ENCODE measurements at regions of chr1 and their contacts with region 1.

Region 1: GRCh38 chr1:11645670-11646265 is 8.5 kb downstream of the FBXO2 start:
- DNase-seq: peak; percentile 62
- ATAC-seq: peak; percentile 78
- H3K4me3 ChIP-seq: no peak overlapping the region
- H3K27ac ChIP-seq: no peak overlapping the region
- H3K4me1 ChIP-seq: peaks cover 2 to 14% of the 10 kb centered on the region in 2 experiments; a peak in 3 of 4 replicates
- H3K27me3 ChIP-seq: no peaks in the 10 kb centered on the region
- CTCF ChIP-seq: peak in 2 of 3 experiments; percentile 73 to 87; a peak in 4 of 6 replicates
- POLR2A ChIP-seq: no peak
- RAD21 ChIP-seq: no peak

Region 2: DNA sequence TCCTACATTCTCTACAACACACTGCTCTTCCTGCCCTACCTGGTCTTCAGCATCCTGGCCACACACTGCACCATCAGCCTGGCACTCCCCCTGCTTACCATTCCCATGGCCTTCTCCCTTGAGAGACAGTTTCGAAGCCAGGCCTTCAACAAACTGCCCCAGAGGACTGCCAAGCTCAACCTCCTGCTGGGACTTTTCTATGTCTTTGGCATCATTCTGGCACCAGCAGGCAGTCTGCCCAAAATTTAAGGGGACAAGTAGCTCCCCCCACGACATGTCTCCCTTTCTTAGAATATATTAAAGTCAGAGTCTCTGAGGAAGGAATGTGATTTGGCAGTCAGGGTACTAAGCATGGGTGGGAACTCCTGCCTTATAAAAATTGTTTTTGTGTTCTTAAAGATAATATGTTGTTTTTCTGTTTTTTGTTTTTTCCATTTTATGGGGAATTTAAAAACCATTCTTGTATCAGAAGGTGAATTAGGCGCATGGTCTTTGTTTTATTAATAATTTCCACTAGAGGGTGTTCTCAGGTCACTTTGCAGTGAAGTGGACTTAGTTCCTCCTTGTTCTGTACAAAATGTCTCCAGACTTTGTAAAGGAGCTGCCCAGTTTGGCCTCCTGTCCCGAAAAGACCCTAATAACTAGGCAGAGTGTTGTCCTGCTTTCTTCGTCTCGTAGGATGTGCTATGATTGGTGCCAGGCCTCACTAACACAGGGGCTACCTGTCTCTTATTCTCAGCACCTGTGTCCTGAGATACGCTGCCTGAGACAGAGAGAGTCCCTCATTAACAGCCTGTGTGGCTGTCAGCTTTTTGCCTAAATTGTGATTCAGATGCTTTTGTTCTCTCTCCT is 359.7 kb before region 1 on chr1:
- CTCF ChIA-PET with region 1: no interaction called
- POLR2A ChIA-PET with region 1: no interaction called
- RAD21 ChIA-PET with region 1: no interaction called
- intact Hi-C with region 1: loop called (anchors 2 kb)
- DNase-seq: no peak
- ATAC-seq: peak; percentile 59
- H3K4me3 ChIP-seq: no peak overlapping the region
- H3K27ac ChIP-seq: no peak overlapping the region
- H3K4me1 ChIP-seq: no peaks in the 10 kb centered on the region
- H3K27me3 ChIP-seq: no peaks in the 10 kb centered on the region
- CTCF ChIP-seq: peak; percentile 12 to 45 (median 37); a peak in 4 of 6 replicates
- POLR2A ChIP-seq: no peak
- RAD21 ChIP-seq: peak; percentile 52

Region 3: DNA sequence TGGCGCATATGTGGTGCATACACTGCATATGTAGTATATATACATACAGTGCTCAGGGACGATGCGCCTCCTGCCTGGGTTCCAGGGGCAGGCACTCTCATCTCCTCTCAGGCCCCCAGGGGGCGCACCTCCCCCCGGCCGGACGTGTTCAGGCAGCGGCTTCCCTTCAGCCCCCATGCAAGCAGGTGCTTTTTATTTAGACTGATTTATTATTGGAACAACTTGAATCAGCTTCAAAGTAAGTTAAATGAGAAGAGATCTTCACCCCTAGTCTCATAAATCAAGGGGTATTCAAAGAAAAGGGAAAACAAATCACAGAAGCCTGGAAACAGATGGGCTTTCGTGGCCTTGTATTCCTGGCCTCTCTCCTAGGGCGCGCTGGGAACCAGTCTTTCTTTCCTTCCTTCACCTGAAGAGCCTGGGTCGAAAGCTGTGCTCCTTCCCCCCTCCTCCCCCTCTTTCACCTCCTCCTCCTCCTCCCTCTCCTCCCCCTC is 308.1 kb before region 1 on chr1:
- CTCF ChIA-PET with region 1: no interaction called
- POLR2A ChIA-PET with region 1: no interaction called
- RAD21 ChIA-PET with region 1: no interaction called
- intact Hi-C with region 1: loop called (anchors 1 kb)
- DNase-seq: peak; percentile 19
- ATAC-seq: peak; percentile 95
- H3K4me3 ChIP-seq: no peak overlapping the region
- H3K27ac ChIP-seq: no peak overlapping the region
- H3K4me1 ChIP-seq: peaks cover 5 to 7% of the 10 kb centered on the region in 2 experiments; a peak in 2 of 4 replicates
- H3K27me3 ChIP-seq: no peaks in the 10 kb centered on the region
- CTCF ChIP-seq: peak; percentile 88 to 98 (median 95)
- POLR2A ChIP-seq: no peak
- RAD21 ChIP-seq: peak; percentile 65

Region 4: DNA sequence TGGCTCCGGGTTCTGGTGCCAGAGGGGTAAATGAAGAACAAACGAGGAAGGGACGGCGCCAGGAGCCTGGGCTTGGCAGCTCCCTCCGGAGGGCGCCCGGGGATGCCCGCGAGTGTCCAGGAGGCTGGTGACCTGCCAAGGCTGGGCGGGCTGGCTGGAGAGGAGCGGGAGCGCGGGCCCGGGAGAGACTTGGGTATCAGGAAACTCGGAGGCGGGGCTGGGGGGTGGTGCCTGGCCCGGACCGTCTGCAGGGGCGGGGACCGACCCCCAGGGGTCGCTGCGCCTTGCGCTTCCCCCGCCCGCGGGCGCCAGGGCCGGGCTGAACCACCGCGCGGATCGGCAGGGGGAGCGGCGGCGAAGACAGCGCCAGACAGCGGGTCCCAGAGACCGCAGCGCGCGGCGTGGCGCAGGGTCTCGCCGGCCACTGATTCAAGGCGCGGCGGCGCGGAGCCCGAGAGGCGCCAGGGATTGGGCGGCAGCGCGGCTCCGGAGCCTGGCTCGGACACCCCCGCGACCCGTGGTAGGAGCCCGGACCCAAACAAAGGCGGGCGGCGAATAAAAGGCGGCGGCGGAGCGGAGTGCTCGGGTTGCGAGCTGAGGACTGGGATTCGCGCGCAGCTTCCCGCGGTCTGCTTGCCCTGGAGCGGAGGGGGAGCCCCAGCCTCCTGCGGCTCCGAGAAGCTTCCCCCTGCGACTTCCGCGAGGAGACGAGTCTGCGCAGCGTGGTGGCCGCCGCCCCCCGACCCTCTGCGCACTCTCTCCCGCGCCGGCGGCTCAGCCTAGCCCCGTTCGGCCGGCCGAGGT is 167.0 kb before region 1 on chr1 and contains the start of gene DISP3:
- CTCF ChIA-PET with region 1: interaction called, 8 read pairs
- POLR2A ChIA-PET with region 1: no interaction called
- RAD21 ChIA-PET with region 1: no interaction called
- intact Hi-C with region 1: loop called (anchors 2 kb)
- DNase-seq: peak; percentile 56
- ATAC-seq: peak; percentile 91
- H3K4me3 ChIP-seq: peak within 1 kb of the TSS; percentile 55 to 68
- H3K27ac ChIP-seq: peak within 1 kb of the TSS; percentile 70; the same call in 1 of the 2 replicates
- H3K4me1 ChIP-seq: peaks cover 0 to 16% of the 10 kb centered on the region in 2 experiments; a peak in 1 of 4 replicates
- H3K27me3 ChIP-seq: peaks cover 58% of the 10 kb centered on the region
- CTCF ChIP-seq: peak; percentile 15 to 84 (median 62); a peak in 4 of 6 replicates
- POLR2A ChIP-seq: peak; percentile 88
- RAD21 ChIP-seq: peak; percentile 42
- total RNA-seq, gene DISP3: 2.3 TPM

Region 5: GRCh38 chr1:11711490-11711889 is 65.7 kb after region 1 on chr1:
- CTCF ChIA-PET with region 1: interaction called, 14 read pairs
- POLR2A ChIA-PET with region 1: no interaction called
- RAD21 ChIA-PET with region 1: interaction called in 1 of 2 experiments, 3 read pairs
- intact Hi-C with region 1: no loop called
- DNase-seq: no peak
- ATAC-seq: 0 out of 2 replicates have a peak, but pooled peaks have one; percentile 5
- H3K4me3 ChIP-seq: no peak overlapping the region
- H3K27ac ChIP-seq: no peak overlapping the region
- H3K4me1 ChIP-seq: peaks cover 16 to 26% of the 10 kb centered on the region in 2 experiments
- H3K27me3 ChIP-seq: no peaks in the 10 kb centered on the region
- CTCF ChIP-seq: no peak
- POLR2A ChIP-seq: no peak
- RAD21 ChIP-seq: no peak

Region 6: DNA sequence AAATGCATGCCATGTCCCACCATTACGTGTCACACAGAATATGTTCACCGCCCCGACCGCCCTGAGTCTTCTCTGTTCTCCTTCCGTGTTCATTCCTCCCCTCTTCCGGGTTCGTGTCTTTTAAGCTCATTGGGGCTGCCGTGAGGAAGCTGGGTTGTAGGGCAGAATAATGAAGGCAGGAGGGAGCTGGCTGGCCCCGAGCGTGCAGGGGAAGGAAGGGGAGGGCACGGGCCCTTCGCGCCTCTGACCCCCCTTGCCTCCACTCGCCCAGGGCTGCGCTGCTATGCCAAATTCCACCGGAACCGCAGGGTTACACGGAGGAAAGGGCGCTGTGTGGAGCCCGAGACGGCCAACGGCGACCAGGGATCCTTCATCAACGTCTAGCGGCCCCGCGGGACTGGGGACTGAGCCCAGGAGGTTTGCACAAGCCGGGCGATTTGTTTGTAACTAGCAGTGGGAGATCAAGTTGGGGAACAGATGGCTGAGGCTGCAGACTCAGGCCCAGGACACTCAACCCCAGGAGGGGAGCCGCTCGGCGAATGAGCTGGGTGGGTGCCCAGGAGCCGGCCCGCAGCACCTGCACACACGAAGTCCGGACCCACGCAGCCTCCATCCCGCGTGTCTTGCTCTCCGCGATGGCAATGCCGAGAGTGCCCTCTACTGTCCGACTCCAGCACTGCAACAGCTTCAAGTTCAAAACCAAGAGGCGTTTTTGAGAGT is 73.7 kb after region 1 on chr1:
- CTCF ChIA-PET with region 1: interaction called, 15 read pairs
- POLR2A ChIA-PET with region 1: no interaction called
- RAD21 ChIA-PET with region 1: interaction called, 6 to 7 read pairs
- intact Hi-C with region 1: no loop called
- DNase-seq: no peak
- ATAC-seq: peak; percentile 78
- H3K4me3 ChIP-seq: no peak overlapping the region
- H3K27ac ChIP-seq: no peak overlapping the region
- H3K4me1 ChIP-seq: peaks cover 0 to 16% of the 10 kb centered on the region in 2 experiments; a peak in 2 of 4 replicates
- H3K27me3 ChIP-seq: no peaks in the 10 kb centered on the region
- CTCF ChIP-seq: peak; percentile 91 to 98 (median 97)
- POLR2A ChIP-seq: no peak
- RAD21 ChIP-seq: peak; percentile 99

Region 7: GRCh38 chr1:11862890-11863289 is 217.1 kb after region 1 on chr1:
- CTCF ChIA-PET with region 1: no interaction called
- POLR2A ChIA-PET with region 1: no interaction called
- RAD21 ChIA-PET with region 1: no interaction called
- intact Hi-C with region 1: no loop called
- DNase-seq: no peak
- ATAC-seq: peak; percentile 26; the same call in 1 of the 2 replicates
- H3K4me3 ChIP-seq: no peak overlapping the region
- H3K27ac ChIP-seq: no peak overlapping the region
- H3K4me1 ChIP-seq: peaks cover 4 to 10% of the 10 kb centered on the region in 2 experiments; a peak in 3 of 4 replicates
- H3K27me3 ChIP-seq: peaks cover 41% of the 10 kb centered on the region
- CTCF ChIP-seq: no peak
- POLR2A ChIP-seq: no peak
- RAD21 ChIP-seq: no peak